Breast epithelium (tissue), 4 donors: ENCODE measurements at regions of chr18 and their contacts with region 1.

Region 1: GRCh38 chr18:70288851-70289328 is at the start of gene SOCS6:
- DNase-seq: peak in 1 of 2 donors; percentile 57
- H3K4me3 ChIP-seq: peak within 1 kb of the TSS; percentile 73 to 93 (median 75)
- H3K27ac ChIP-seq: peak within 1 kb of the TSS; percentile 88 to 95
- H3K4me1 ChIP-seq: peaks cover 7% of the 10 kb centered on the region in 2 donors
- H3K27me3 ChIP-seq: no peaks in the 10 kb centered on the region
- CTCF ChIP-seq: no peak
- POLR2A ChIP-seq: no peak
- total RNA-seq, gene SOCS6: 17.9 to 32.9 (median 20.6) TPM

Region 2: DNA sequence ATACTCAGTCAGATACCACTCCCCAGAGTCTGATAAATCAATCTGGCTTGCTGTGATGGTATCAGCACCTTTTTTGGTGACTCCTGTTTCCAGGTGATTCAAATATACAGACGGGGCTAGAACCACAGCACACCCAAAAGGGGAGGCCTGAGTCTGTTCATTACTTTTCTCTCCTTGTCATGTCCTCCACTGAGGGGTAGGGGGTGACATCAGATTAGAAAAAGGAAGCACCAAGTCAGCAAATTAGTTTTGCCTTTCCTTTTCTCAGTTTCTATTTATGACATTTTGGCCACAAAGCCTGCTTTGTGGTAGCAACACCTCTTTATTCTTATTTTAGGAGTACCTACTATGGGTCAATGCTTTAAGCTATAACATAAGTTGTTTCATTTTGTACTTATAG is 1363.6 kb before region 1 on chr18:
- intact Hi-C with region 1: loop called (anchors 5 kb)
- DNase-seq: no peak
- H3K4me3 ChIP-seq: no peak overlapping the region
- H3K27ac ChIP-seq: no peak overlapping the region
- H3K4me1 ChIP-seq: no peaks in the 10 kb centered on the region
- H3K27me3 ChIP-seq: no peaks in the 10 kb centered on the region
- CTCF ChIP-seq: no peak
- POLR2A ChIP-seq: no peak

Region 3: GRCh38 chr18:70216788-70217187 is 72.1 kb before region 1 on chr18:
- intact Hi-C with region 1: no loop called
- DNase-seq: no peak
- H3K4me3 ChIP-seq: no peak overlapping the region
- H3K27ac ChIP-seq: no peak overlapping the region
- H3K4me1 ChIP-seq: no peaks in the 10 kb centered on the region
- H3K27me3 ChIP-seq: peaks cover 0 to 4% of the 10 kb centered on the region in 2 donors
- CTCF ChIP-seq: no peak
- POLR2A ChIP-seq: no peak

Region 4: GRCh38 chr18:70310560-70311320 is 21.9 kb after region 1 on chr18:
- intact Hi-C with region 1: no loop called
- DNase-seq: no peak
- H3K4me3 ChIP-seq: no peak overlapping the region
- H3K27ac ChIP-seq: no peak overlapping the region
- H3K4me1 ChIP-seq: no peaks in the 10 kb centered on the region
- H3K27me3 ChIP-seq: no peaks in the 10 kb centered on the region
- CTCF ChIP-seq: no peak
- POLR2A ChIP-seq: no peak